ENCODE measurements at regions of chrX and their contacts with region 1.

Region 1: GRCh38 chrX:28498658-28499057 is 88.6 kb upstream of the IL1RAPL1 start:
- DNase-seq: peak; percentile 45
- ATAC-seq: peak; percentile 73
- H3K4me3 ChIP-seq: no peak overlapping the region
- H3K27ac ChIP-seq: peak overlapping the region; percentile 40
- H3K4me1 ChIP-seq: peaks cover 16% of the 10 kb centered on the region
- H3K27me3 ChIP-seq: no peaks in the 10 kb centered on the region
- CTCF ChIP-seq: no peak

Region 2: GRCh38 chrX:28099166-28099565 is 399.5 kb before region 1 on chrX:
- CTCF ChIA-PET with region 1: no interaction called
- POLR2A ChIA-PET with region 1: no interaction called
- intact Hi-C with region 1: loop called (anchors 10 kb)
- DNase-seq: no peak
- ATAC-seq: no peak
- H3K4me3 ChIP-seq: no peak overlapping the region
- H3K27ac ChIP-seq: no peak overlapping the region
- H3K4me1 ChIP-seq: no peaks in the 10 kb centered on the region
- H3K27me3 ChIP-seq: no peaks in the 10 kb centered on the region
- CTCF ChIP-seq: no peak

Measured in PC-3 (cell line).